Activated B cell treated with CpG ODN at 0.5 μM for 24 hours (primary cell): ENCODE measurements at regions of chrX and their contacts with region 1.

Region 1: DNA sequence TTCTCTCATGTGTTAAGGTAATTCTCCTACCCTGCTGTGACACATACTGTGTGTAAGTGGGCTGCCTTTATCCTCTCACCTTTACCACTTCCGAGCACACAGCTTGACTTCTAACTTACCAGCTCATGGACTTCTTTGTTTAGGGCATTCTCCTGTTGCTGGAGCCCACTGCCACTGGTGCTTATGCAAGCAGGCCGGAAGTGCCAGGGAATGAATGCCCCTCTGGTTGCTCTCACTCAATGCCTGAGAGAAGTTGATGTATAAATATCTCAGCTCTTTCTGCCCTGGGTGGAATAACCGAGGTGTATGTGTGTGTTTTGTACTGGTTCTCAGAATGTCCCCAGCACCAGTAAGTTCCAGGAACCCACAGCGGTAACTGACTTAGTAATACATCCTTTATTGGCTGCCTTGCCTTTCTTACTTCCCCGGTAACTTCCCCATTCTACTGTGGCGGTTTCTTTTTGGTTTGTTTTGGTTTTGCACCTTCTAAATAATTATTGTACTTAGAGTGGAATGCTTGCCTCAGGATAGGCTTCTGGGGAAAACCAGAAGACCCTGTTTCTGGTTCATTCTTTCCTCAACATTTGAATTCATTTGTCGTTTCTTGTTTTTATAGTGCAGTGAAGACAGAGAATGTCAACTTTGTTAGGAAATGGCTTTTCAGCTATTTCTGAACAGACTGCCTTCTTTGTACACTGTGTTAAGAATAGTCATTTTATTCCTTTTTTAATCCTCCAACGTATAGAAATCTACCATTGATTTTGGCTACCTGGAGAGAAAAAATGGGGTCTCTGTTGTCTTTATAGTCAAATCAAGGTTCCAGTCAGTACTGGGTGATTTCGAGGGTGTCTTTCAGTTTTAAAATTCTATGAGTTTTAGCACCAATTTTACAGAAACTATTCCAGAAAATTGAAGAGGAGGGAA is 45.4 kb downstream of the CXorf58 start:
- DNase-seq: peak; percentile 13
- ATAC-seq: peak; percentile 92
- H3K4me3 Mint-ChIP-seq: peak overlapping the region; percentile 72
- H3K27ac Mint-ChIP-seq: peak overlapping the region; percentile 90
- H3K4me1 Mint-ChIP-seq: peaks cover 12% of the 10 kb centered on the region
- H3K27me3 Mint-ChIP-seq: no peaks in the 10 kb centered on the region
- CTCF ChIP-seq: no peak

Region 2: DNA sequence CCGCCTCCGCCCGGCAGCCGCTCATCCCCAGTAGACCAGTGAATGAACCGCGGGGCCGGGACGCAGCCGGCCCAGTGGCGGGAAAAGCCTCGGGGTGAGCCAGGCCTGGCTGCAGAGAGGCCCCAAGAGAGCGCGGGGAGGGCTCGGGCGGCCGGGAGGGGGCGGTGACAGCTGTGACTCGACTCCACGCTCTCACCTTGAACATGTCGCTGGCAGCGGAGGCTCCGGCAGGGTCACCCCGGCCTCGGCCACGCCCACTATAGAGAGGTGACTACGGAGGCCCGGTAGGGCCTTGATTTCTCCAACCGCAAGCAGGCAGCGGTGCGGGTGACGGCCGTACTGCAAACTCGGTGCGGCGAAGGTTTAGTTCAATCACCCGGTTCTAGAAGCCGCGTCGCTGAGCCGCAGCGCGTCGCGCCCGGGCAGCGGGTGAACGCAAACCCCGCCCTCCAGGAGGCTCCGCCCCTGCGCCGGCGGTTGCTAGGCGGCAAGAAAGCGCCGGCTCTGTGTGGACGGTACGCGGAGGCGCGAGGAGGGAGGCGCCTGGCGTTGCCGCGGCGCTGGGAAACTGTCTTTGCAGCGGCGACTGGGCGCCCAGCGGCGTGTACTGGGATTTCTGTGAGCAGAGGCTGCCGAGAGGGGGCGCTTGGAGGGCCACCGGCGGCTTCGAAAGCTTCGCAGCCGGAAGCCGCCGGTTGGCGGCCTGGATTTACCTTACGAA is 45.6 kb before region 1 on chrX and contains the starts of genes APOO and CXorf58:
- CTCF ChIA-PET with region 1: no interaction called
- POLR2A ChIA-PET with region 1: interaction called, 4 read pairs
- intact Hi-C with region 1: loop called (anchors 2 kb)
- DNase-seq: peak; percentile 85
- ATAC-seq: peak; percentile 90
- H3K4me3 Mint-ChIP-seq: peak within 1 kb of the TSS; percentile 82
- H3K27ac Mint-ChIP-seq: peak within 1 kb of the TSS; percentile 88
- H3K4me1 Mint-ChIP-seq: peaks cover 17% of the 10 kb centered on the region
- H3K27me3 Mint-ChIP-seq: no peaks in the 10 kb centered on the region
- CTCF ChIP-seq: peak; percentile 7
- total RNA-seq, gene APOO: 14.0 and 16.6 TPM in 2 replicates
- total RNA-seq, gene CXorf58: not detected in 2 replicates